ENCODE measurements at regions of chr20 and their contacts with region 1.

Region 1: DNA sequence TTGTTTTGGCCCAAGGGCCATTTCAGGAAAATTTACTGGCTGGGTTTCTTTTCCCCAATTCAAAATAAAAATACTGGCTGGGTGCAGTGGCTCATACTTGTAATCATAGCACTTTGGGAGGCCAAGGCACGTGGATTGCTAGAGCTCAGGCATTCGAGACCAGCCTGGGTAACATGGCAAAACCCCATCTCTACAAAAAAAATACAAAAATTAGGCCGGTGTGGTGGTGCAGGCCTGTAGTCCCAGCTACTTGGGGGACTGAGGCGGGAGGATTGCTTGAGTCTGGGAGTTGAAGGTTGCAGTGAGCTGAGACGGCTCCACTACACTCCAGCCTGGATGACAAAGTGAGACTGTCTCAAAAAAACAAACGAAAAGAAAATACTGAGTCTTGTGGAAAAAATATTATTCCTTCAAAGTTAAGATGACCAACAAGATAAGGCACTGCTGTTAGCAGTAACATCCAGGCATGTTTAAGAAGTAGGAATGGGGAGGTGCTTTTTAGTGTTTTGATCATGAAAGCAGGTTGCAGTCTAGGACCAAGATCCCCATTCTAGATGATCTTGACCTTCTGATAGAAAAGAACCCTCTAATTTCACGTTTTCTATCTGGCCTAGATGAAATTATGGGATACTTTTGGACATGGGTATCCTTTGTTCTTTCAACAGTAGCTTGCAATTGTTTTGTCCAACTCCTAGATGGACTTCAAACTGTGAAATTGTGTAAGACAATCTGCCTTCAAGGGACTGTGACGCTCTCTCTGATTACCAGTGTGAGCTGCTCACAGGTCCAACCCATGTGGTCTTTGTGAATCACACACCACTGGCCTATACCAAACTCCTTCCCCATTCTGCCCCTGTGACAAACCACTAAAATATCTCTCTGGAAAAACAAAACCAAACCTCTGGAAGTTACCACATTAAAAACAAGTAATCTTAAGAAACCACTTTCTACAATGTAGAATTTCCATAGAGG is 59.8 kb downstream of the NINL start:
- DNase-seq: no peak
- ATAC-seq: peak in 1 of 4 donors; percentile 52
- H3K4me3 ChIP-seq: no peak overlapping the region
- H3K27ac ChIP-seq: no peak overlapping the region
- H3K4me1 ChIP-seq: no peaks in the 10 kb centered on the region
- H3K27me3 ChIP-seq: no peaks in the 10 kb centered on the region
- CTCF ChIP-seq: no peak
- POLR2A ChIP-seq: no peak

Region 2: GRCh38 chr20:25447671-25448070 is 77.9 kb before region 1 on chr20:
- intact Hi-C with region 1: no loop called
- DNase-seq: no peak
- ATAC-seq: no peak
- H3K4me3 ChIP-seq: no peak overlapping the region
- H3K27ac ChIP-seq: no peak overlapping the region
- H3K4me1 ChIP-seq: peaks cover 0 to 1% (median 0%) of the 10 kb centered on the region in 12 donors
- H3K27me3 ChIP-seq: no peaks in the 10 kb centered on the region
- CTCF ChIP-seq: no peak
- POLR2A ChIP-seq: no peak

Region 3: DNA sequence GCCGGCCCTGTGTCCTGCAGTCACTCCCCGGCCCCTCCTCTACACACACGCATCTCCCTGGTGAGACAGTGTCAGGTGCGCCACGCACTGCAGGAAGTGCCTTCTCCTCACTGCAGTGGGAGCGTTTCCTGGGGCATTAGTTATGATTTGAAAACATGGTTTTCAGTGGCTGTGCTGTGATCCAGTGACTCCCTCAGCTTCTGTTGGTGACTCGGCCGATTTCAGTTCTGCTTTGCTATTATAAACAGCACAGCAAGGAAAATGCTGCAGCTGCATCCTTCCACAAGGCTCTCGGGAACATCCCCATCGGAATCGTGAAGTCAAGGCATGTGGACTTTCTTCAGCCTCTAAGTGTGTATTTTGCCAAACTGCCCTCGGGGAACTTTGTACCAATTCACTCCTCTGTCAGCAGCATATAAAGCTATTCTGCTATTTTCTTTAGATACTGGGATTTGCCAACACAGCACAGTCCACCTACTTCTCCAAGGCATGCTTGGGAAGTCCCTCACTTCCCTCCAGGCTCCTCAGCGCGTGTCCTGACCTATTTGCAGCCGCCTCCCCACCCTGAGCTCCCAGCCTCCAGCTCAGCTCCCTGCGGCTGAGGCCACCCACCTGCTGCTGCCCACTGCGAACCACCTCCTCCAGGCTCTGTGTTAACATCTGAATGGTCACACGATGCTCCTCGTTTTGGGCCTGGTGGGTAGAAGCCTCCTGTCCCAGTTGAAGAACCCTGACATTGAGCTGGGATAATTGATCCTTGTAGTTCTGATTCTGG is 63.6 kb before region 1 on chr20:
- intact Hi-C with region 1: loop called in 3 of 10 experiments (anchors 10 kb)
- DNase-seq: peak in 2 of 5 donors; percentile 28 to 59
- ATAC-seq: peak in 2 of 4 donors; percentile 17 to 35
- H3K4me3 ChIP-seq: no peak overlapping the region
- H3K27ac ChIP-seq: peak overlapping the region in 2 of 12 donors; percentile 32 to 52
- H3K4me1 ChIP-seq: peaks cover 0 to 10% (median 0%) of the 10 kb centered on the region in 12 donors
- H3K27me3 ChIP-seq: no peaks in the 10 kb centered on the region
- CTCF ChIP-seq: no peak
- POLR2A ChIP-seq: no peak

Measured in heart left ventricle (tissue), 16 donors.